ENCODE measurements at regions of chr7 and their contacts with region 1.

Region 1: DNA sequence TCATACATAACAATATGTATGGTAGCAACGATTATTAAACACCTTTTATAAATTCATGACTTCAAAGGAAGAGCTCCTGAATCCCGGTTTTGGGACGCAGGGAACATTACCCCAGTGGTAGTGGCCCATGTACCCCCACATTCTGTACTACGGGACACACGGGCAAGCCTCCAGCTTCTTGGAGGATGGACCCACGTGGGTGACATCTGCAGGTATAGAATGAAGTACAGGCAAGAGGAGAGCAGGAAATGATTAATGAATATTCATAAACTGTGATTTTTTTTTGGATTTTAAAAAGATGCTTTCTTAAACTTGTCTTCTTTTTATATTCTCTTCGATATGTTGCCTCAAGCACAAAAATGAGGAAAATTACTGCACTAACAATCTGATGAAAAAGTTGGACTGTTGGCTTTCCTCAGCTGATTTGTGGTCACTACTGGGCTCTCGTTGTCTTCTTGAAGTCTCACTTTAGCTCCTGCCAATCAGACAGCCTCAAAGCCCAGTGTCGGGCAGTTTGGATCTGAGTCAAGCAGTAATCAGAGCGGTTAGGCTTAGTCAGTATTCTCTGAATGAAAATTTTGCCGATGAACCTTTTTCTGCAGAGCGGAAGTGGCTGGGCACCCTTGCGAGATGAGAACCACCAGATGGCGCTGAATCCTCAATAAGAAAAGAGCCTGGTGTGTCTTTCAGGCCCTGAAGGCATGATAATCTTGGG is 157.7 kb upstream of the CDCA7L start:
- DNase-seq: peak; percentile 48
- H3K4me3 Mint-ChIP-seq: no peak overlapping the region
- H3K27ac Mint-ChIP-seq: no peak overlapping the region
- H3K4me1 Mint-ChIP-seq: peaks cover 6% of the 10 kb centered on the region
- H3K27me3 Mint-ChIP-seq: peaks cover 9% of the 10 kb centered on the region

Region 2: DNA sequence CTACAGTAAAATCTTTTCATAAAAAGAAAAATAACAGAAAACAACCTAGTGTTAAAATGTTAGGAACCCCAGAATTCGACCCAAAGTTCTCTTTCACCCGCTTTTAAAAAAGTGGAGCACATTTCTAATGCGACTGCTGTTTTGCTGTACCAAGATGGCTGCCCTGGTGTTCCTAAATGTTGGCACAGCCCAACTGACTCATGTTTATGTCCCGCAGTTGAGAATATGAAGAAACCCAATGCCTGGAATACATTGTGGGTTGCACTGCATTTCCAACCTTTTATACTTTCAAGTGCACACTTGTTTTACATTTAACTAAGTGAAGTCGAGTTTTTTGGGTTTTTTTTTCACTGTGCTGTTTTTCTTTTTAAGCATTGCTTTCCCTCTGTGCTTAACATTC is 395.6 kb after region 1 on chr7:
- intact Hi-C with region 1: loop called (anchors 1 kb)
- DNase-seq: no peak
- H3K4me3 Mint-ChIP-seq: no peak overlapping the region
- H3K27ac Mint-ChIP-seq: no peak overlapping the region
- H3K4me1 Mint-ChIP-seq: peaks cover 4% of the 10 kb centered on the region
- H3K27me3 Mint-ChIP-seq: peaks cover 24% of the 10 kb centered on the region